Activated CD4-positive, alpha-beta memory T cell treated with anti-CD3 and anti-CD28 coated beads for 36 hours (primary cell): ENCODE measurements at regions of chr10 and their contacts with region 1.

Region 1: DNA sequence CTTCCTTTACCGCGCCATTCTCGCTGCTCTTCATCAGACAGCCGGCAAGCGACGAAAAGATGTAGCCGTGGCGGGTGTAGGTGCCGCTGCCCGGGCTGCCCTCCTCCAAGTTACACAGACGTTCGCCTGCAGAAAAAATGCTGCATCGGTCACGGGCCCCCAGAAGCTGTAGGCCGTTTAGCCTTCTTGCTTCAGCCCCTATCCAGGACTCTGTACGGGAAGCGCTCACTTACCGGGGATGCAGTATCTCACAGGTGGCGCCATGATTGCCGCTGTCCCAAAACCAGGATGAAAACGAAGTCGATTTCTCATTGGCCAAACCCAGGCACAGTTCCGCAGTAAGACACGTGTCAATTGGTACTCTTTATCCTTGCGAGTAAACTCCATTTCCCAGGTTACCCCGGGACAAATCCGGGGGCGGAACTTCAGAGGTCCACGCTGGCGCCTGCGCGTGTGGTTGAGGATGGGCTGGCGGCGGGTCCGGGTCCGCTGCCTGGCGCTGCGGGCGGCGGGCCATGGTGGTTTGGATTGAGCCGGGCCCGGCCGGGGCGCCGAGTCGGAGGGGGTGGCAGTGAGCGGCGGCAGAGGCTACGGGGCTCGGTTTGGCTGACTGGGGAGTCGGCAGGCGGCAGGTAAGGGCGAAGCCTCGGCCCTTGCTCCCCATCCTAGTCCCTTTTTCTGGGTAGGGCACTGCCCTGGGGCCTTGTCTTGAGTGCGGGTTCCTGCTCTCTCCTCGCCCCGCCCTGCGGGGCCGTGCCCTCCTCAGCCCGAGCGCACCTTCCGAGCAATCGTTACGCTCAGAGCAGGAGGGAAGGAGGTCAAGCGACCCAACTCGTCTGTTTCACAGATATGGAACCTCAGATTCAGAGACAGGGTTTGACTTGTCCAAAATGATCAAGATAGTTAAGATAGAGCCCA is at the starts of genes EXOSC1 and ZDHHC16:
- DNase-seq: peak; percentile 96
- H3K4me3 Mint-ChIP-seq: peak within 1 kb of the TSS; percentile 99
- H3K27ac Mint-ChIP-seq: peak within 1 kb of the TSS; percentile 58
- H3K4me1 Mint-ChIP-seq: peaks cover 57% of the 10 kb centered on the region
- H3K27me3 Mint-ChIP-seq: no peaks in the 10 kb centered on the region
- total RNA-seq, gene EXOSC1: 69.0 to 75.1 TPM
- total RNA-seq, gene ZDHHC16: 42.5 to 43.6 TPM

Region 2: GRCh38 chr10:97400665-97401454 is 45.1 kb before region 1 on chr10 and contains the start of gene RRP12:
- CTCF ChIA-PET with region 1: interaction called, 22 read pairs
- POLR2A ChIA-PET with region 1: interaction called, 14 read pairs
- intact Hi-C with region 1: loop called (anchors 1 kb)
- DNase-seq: peak; percentile 88
- H3K4me3 Mint-ChIP-seq: peak within 1 kb of the TSS; percentile 93
- H3K27ac Mint-ChIP-seq: peak within 1 kb of the TSS; percentile 88
- H3K4me1 Mint-ChIP-seq: peaks cover 10% of the 10 kb centered on the region
- H3K27me3 Mint-ChIP-seq: no peaks in the 10 kb centered on the region
- total RNA-seq, gene RRP12: 40.4 to 41.8 TPM

Region 3: DNA sequence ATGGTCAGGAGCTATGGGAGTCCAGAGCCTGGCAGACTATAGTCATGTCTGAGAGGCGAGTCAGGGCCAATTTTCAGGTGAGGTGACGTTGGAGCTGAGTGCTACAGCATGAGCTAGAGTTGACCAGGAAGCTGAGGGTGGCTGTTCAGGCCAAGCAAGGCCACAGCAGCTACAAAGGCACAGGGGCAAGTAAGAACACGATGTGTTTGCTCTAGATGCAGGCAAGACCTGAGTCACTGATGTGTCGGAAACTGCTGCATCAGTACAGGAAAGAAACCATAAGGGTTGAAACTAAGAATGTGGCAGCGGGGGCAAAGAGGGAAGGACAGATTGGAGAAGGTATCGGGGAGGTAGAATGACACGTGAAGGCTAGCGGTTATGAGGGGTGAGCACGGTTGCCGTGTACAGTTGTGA is 33.1 kb before region 1 on chr10:
- CTCF ChIA-PET with region 1: interaction called, 57 read pairs
- POLR2A ChIA-PET with region 1: interaction called, 70 read pairs
- intact Hi-C with region 1: loop called (anchors 1 kb)
- DNase-seq: peak; percentile 90
- H3K4me3 Mint-ChIP-seq: peak overlapping the region; percentile 59
- H3K27ac Mint-ChIP-seq: peak overlapping the region; percentile 92
- H3K4me1 Mint-ChIP-seq: peaks cover 55% of the 10 kb centered on the region
- H3K27me3 Mint-ChIP-seq: no peaks in the 10 kb centered on the region

Region 4: DNA sequence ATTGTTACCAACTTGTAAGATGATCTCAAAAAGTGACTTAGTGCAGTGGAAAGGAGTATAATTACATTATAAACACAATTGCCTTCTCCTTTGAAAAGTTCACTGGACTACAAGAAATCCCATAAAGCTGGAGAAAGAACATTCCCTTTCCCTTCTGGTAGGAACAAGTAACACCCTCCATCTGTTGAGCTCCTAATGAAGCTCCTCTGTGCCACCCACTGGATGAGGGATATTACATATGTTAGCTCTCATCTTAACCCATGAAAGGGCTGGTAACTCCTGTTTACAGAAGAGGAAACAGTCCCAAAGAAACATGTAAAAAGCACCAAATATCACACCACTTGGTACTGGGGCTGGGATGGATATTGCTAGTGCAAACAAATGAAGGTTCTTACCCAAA is 11.9 kb before region 1 on chr10:
- CTCF ChIA-PET with region 1: interaction called, 7 read pairs
- POLR2A ChIA-PET with region 1: interaction called, 37 read pairs
- intact Hi-C with region 1: no loop called
- DNase-seq: no peak
- H3K4me3 Mint-ChIP-seq: no peak overlapping the region
- H3K27ac Mint-ChIP-seq: peak overlapping the region; percentile 86
- H3K4me1 Mint-ChIP-seq: peaks cover 23% of the 10 kb centered on the region
- H3K27me3 Mint-ChIP-seq: no peaks in the 10 kb centered on the region